Left lung (tissue), 14 donors: ENCODE measurements at regions of chr15 and their contacts with region 1.

Region 1: DNA sequence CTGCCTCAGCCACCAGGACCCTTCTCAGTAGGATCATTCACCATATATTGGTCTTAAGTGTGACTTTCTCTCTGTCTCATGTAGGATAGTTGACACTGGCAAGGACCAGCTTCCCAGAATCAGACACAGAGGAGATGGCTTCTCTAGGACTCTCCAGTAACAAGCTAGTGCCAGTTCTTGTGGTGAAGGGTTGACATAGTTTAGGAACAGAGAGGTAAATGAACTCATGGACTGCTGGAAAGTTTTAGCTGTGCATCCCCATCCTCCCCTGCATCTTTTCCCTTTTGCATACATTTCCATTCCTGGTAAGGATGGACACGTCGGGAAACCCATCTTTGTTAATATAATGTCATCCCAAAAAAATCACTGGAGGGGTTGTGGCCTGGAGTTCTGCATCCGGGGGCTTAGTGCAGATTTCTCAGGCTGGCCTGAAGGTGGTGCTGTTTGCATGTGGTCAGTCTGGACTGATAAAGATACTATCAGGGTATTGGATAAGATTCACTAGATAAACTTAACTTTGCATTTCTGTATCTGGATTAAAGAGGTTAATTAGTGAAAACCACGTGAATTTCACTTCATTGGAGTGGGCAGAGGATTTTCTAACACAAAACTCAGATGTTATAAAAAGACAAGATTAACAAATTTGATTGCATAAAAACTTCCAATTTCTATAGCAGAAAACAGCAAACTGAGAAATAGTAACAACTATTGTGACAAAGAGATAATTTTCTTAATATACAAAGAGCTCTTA is 110.8 kb downstream of the TBC1D2B start:
- DNase-seq: peak in 1 of 4 donors; percentile 52
- ATAC-seq: peak; percentile 96
- H3K4me3 ChIP-seq: no peak overlapping the region
- H3K27ac ChIP-seq: no peak overlapping the region
- H3K4me1 ChIP-seq: no peaks in the 10 kb centered on the region
- H3K27me3 ChIP-seq: no peaks in the 10 kb centered on the region
- CTCF ChIP-seq: peak; percentile 79 to 81

Region 2: GRCh38 chr15:78034495-78035191 is 67.9 kb after region 1 on chr15:
- intact Hi-C with region 1: no loop called
- DNase-seq: peak in 2 of 4 donors; percentile 70 to 83
- ATAC-seq: peak; percentile 74
- H3K4me3 ChIP-seq: no peak overlapping the region
- H3K27ac ChIP-seq: peak overlapping the region; percentile 68 to 74
- H3K4me1 ChIP-seq: peaks cover 34 to 88% of the 10 kb centered on the region in 2 donors
- H3K27me3 ChIP-seq: no peaks in the 10 kb centered on the region
- CTCF ChIP-seq: no peak

Region 3: DNA sequence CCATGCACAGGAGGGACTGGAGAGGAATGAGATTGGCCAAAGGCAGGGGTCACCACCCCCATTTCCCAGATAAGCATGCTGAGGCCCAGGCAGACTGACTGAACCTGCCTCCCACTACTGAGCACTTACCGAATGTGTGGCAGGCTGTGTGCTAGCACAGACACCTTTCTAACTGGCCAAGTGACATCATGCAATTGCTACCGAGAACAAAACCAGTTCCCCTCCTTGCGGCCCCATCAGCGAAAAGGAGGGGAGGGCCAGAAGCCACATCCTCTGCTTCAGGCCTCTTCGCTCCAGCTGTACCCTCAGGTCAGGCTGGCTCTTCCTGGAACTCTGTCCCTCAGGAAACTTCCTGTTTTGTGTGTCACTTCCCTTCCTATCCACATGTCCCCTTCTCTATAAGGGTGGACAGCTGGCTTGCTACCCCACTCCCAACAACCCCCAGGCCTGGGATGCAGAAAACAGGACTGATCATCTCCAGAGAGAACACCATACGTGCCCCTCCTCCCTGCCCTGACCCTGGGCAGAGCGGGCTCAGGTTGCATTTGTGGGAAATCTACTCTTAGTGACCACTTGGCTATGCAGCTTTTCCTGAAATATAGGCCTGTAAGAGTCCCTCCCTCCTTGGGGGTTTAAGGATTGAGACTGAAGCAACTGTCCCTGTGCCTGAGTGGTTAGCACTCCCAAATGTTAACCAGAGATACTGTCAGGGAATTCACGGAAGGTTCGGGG is 137.2 kb after region 1 on chr15:
- intact Hi-C with region 1: loop called in 1 of 2 experiments (anchors 5 kb)
- DNase-seq: peak in 1 of 4 donors; percentile 42
- ATAC-seq: no peak
- H3K4me3 ChIP-seq: no peak overlapping the region
- H3K27ac ChIP-seq: peak overlapping the region in 1 of 2 donors; percentile 61
- H3K4me1 ChIP-seq: peaks cover 3 to 31% of the 10 kb centered on the region in 2 donors
- H3K27me3 ChIP-seq: no peaks in the 10 kb centered on the region
- CTCF ChIP-seq: no peak

Region 4: GRCh38 chr15:78234515-78235040 is 267.9 kb after region 1 on chr15 and contains the start of gene ACSBG1:
- intact Hi-C with region 1: loop called in 1 of 2 experiments (anchors 10 kb)
- DNase-seq: no peak
- ATAC-seq: no peak
- H3K4me3 ChIP-seq: no peak within 1 kb of the TSS
- H3K27ac ChIP-seq: no peak within 1 kb of the TSS
- H3K4me1 ChIP-seq: no peaks in the 10 kb centered on the region
- H3K27me3 ChIP-seq: no peaks in the 10 kb centered on the region
- CTCF ChIP-seq: no peak
- polyA plus RNA-seq, gene ACSBG1: 0.42 to 1.4 (median 0.74) TPM